ENCODE measurements at regions of chr12 and their contacts with region 1.

Region 1: DNA sequence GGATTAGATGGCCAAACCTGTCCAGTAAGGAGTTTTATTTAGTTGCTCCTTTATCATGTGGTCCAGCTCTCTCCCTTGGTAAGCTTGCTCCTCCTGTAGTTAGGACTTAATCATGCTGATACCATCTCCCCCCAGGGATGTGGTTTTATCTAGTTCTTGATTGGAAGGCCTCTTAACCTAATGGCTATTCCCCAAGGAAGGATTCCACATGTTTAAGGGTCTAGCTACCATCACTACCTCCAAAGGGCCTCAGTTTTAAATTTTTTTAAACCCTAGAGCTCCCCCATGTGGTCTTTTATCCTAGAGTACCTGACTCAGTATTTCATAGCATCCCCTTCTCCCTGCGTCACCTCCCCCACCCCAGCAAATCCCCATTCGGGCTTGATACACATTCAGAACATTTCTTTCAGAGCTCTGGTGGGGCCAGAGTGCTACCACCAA is 22.5 kb downstream of the MAP3K12 start:
- DNase-seq: peak in 2 of 9 donors; percentile 17 to 25
- ATAC-seq: peak; percentile 40
- H3K4me3 ChIP-seq: no peak overlapping the region
- H3K4me3 Mint-ChIP-seq: no peak overlapping the region
- H3K27ac ChIP-seq: no peak overlapping the region
- H3K27ac Mint-ChIP-seq: peak overlapping the region in 6 of 9 donors; percentile 28 to 59 (median 50)
- H3K4me1 ChIP-seq: peaks cover 8 to 10% of the 10 kb centered on the region in 2 donors
- H3K4me1 Mint-ChIP-seq: peaks cover 11 to 49% (median 41%) of the 10 kb centered on the region in 7 donors
- H3K27me3 ChIP-seq: no peaks in the 10 kb centered on the region
- H3K27me3 Mint-ChIP-seq: no peaks in the 10 kb centered on the region

Region 2: DNA sequence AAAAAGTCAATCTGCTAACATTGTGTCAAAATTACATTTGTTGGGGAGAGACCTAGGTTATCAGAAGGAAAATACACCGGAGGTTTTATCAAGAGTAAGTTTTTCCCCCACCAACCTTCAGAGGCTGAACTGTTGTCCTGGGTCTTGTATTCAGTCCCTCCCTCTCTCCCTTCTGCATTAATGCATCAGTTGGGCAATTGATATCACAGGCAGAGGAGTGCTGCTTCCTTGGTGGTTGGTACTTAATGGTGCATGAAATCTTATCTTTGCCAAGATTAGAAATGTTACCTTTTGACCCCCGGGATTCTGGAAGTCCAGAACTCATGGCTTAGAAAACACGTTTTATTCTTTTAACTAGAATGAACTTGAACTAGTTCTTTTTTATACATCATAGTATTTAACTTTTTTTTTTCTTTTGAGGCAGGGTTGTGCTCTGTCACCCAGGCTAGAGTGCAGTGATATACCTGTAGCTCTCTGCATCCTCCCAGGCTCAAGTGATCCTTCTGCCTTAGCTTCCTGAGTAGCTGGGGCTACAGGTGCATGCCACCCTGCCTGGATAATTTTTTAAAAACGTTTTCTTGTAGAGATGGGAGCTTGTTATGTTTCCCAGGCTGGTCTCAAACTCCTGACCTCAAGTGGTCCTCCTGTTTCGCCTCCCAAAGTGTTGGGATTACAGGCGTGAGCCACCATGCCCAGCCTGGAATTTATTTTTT is 20.0 kb before region 1 on chr12:
- CTCF ChIA-PET with region 1: interaction called, 4 read pairs
- POLR2A ChIA-PET with region 1: interaction called, 4 read pairs
- intact Hi-C with region 1: loop called (anchors 2 kb)
- DNase-seq: no peak
- ATAC-seq: no peak
- H3K4me3 ChIP-seq: no peak overlapping the region
- H3K4me3 Mint-ChIP-seq: no peak overlapping the region
- H3K27ac ChIP-seq: no peak overlapping the region
- H3K27ac Mint-ChIP-seq: no peak overlapping the region
- H3K4me1 ChIP-seq: peaks cover 16 to 22% of the 10 kb centered on the region in 2 donors
- H3K4me1 Mint-ChIP-seq: peaks cover 29 to 59% (median 51%) of the 10 kb centered on the region in 7 donors
- H3K27me3 ChIP-seq: no peaks in the 10 kb centered on the region
- H3K27me3 Mint-ChIP-seq: no peaks in the 10 kb centered on the region

Region 3: GRCh38 chr12:53492830-53493611 is 16.2 kb after region 1 on chr12:
- CTCF ChIA-PET with region 1: interaction called, 5 read pairs
- POLR2A ChIA-PET with region 1: interaction called, 47 read pairs
- intact Hi-C with region 1: loop called in 1 of 2 experiments (anchors 2 kb)
- DNase-seq: peak; percentile 72 to 90 (median 80)
- ATAC-seq: peak; percentile 98
- H3K4me3 ChIP-seq: peak overlapping the region; percentile 82
- H3K4me3 Mint-ChIP-seq: peak overlapping the region; percentile 89 to 98 (median 92)
- H3K27ac ChIP-seq: peak overlapping the region; percentile 87
- H3K27ac Mint-ChIP-seq: peak overlapping the region; percentile 88 to 98 (median 95)
- H3K4me1 ChIP-seq: peaks cover 12 to 16% of the 10 kb centered on the region in 2 donors
- H3K4me1 Mint-ChIP-seq: peaks cover 19 to 51% (median 40%) of the 10 kb centered on the region in 7 donors
- H3K27me3 ChIP-seq: no peaks in the 10 kb centered on the region
- H3K27me3 Mint-ChIP-seq: no peaks in the 10 kb centered on the region

Region 4: DNA sequence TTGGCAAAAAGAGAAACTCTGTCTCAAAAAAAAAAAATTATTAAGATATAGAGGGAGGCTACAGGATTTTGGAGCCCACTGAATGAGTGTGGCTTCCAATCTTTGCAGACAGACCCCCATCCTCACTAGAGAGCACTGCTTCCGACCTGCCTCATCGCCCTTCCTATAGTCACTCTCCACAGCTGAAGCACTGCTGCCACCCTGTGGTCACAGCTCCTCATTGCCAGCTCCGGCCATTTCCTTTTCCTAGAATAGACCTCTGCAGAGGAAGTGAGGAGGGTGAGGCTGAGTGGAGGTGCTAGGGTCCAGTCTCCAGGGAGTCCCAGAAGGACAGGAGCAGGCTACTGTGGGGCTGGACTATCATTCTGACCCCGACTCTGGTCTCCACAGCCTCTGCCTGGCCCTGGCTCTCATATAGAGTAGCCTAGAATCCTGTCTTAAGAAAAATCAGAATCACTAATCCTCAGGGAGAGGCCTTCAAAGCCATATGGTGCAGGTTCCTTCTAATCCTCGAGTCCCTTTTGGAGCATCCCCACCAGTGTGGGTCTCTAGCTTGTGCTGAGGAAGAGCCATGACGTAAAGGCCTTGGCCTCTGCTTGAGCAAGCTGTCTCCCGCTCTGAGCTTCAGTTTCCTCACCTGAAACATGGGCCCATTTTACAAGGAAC is 31.9 kb after region 1 on chr12:
- CTCF ChIA-PET with region 1: interaction called, 36 read pairs
- POLR2A ChIA-PET with region 1: interaction called, 3 read pairs
- intact Hi-C with region 1: loop called (anchors 1 kb)
- DNase-seq: peak; percentile 63 to 82 (median 73)
- ATAC-seq: peak; percentile 98
- H3K4me3 ChIP-seq: no peak overlapping the region
- H3K4me3 Mint-ChIP-seq: peak overlapping the region in 1 of 10 donors; percentile 39
- H3K27ac ChIP-seq: peak overlapping the region; percentile 39
- H3K27ac Mint-ChIP-seq: peak overlapping the region in 8 of 9 donors; percentile 13 to 80 (median 66)
- H3K4me1 ChIP-seq: peaks cover 6 to 7% of the 10 kb centered on the region in 2 donors
- H3K4me1 Mint-ChIP-seq: peaks cover 5 to 17% (median 9%) of the 10 kb centered on the region in 7 donors
- H3K27me3 ChIP-seq: no peaks in the 10 kb centered on the region
- H3K27me3 Mint-ChIP-seq: no peaks in the 10 kb centered on the region

Region 5: DNA sequence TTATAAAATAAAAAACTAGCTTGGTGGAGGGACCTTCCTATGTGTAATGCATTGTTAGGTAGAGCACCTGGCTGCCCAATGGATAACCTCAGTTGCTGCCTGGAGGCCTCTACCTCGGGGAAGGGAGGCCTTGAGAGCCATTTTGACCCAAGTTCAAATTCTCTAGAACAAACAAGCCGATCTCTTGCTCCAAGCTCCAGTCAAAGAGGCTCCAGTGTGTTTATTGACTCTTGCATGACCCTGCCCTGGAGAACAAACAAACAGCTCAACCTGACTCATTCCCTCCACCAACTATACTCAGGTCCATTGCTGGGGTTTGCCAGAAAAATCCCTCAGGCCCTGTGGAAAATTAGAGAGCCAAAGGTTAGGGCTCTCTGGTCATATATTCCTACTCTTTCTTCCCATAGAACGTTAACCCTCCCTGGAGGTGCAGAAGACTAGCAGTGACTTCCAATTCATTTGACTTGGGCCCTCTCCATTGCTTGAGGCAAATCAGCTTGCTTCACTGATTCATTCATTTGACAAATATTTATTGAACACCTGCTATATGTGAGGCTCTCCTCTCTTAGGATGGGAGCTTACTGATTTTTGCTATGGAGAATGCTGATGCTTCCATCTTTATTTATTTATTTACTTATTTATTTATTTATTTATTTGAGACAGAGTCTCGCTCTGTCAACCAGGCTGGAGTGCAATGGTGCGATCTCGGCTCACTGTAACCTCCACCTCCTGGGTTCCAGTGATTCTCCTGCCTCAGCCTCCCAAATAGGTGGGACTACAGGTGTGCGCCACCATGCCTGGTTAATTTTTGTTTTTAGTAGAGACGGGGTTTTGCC is 348.7 kb after region 1 on chr12:
- CTCF ChIA-PET with region 1: no interaction called
- POLR2A ChIA-PET with region 1: no interaction called
- intact Hi-C with region 1: no loop called
- DNase-seq: no peak
- ATAC-seq: no peak
- H3K4me3 ChIP-seq: no peak overlapping the region
- H3K4me3 Mint-ChIP-seq: no peak overlapping the region
- H3K27ac ChIP-seq: no peak overlapping the region
- H3K27ac Mint-ChIP-seq: no peak overlapping the region
- H3K4me1 ChIP-seq: no peaks in the 10 kb centered on the region
- H3K4me1 Mint-ChIP-seq: no peaks in the 10 kb centered on the region
- H3K27me3 ChIP-seq: no peaks in the 10 kb centered on the region
- H3K27me3 Mint-ChIP-seq: peaks cover 42 to 65% (median 51%) of the 10 kb centered on the region in 5 donors